Mucosa of descending colon (tissue), 3 donors: ENCODE measurements at regions of chr10 and their contacts with region 1.

Region 1: GRCh38 chr10:73644015-73644743 is 2.9 kb upstream of the MYOZ1 start:
- DNase-seq: peak in 1 of 3 donors; percentile 69
- ATAC-seq: peak; percentile 83
- H3K4me3 ChIP-seq: no peak overlapping the region
- H3K4me1 ChIP-seq: peaks cover 7% of the 10 kb centered on the region
- CTCF ChIP-seq: peak; percentile 65

Region 2: DNA sequence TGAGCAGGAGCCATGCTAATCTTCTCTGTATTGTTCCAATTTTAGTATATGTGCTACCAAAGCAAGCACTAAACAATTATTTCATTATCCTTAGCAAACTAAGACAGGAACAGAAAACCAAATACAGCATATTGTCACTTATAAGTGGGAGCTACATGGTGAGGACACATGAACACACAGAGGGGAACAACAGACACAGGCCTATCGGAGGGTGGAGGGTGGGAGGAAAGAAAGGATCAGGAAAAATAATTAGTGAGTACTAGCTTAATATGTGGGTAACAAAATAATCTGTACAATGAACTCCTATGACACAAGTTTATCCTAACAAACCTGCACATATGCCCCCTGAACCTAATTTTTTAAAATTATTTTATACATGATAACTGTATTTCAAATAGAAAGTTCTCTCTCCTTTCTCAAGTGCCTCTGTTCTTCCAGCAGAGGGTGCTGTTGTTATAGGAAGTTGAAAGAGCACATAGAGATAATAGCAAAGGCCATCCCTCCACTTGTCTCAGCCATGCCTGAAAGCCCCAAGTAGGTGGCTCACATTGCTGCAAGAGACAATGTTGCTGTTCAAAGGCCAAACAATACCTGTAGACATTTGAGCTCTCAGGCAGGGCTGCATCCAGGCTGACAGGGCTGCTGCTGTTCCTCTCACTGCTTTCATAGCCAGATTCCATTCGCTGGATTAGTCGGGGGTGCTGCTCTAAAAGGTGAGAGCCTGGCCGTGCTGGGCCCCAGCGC is 114.9 kb before region 1 on chr10:
- intact Hi-C with region 1: loop called (anchors 5 kb)
- DNase-seq: peak in 2 of 3 donors; percentile 45 to 70
- ATAC-seq: peak; percentile 88
- H3K4me3 ChIP-seq: no peak overlapping the region
- H3K4me1 ChIP-seq: peaks cover 9% of the 10 kb centered on the region
- CTCF ChIP-seq: peak; percentile 64

Region 3: GRCh38 chr10:73534857-73535256 is 109.3 kb before region 1 on chr10:
- intact Hi-C with region 1: loop called in 1 of 2 experiments (anchors 5 kb)
- DNase-seq: no peak
- ATAC-seq: no peak
- H3K4me3 ChIP-seq: no peak overlapping the region
- H3K4me1 ChIP-seq: peaks cover 9% of the 10 kb centered on the region
- CTCF ChIP-seq: no peak